ENCODE measurements at regions of chr19 and their contacts with region 1.

Region 1: GRCh38 chr19:29610563-29611271 is 4.6 kb downstream of the POP4 start:
- DNase-seq: peak; percentile 65 to 92 (median 80)
- ATAC-seq: peak; percentile 56 to 62 (median 58)
- H3K4me3 ChIP-seq: no peak overlapping the region
- H3K4me3 Mint-ChIP-seq: no peak overlapping the region
- H3K27ac ChIP-seq: peak overlapping the region; percentile 31
- H3K27ac Mint-ChIP-seq: peak overlapping the region; percentile 31 to 59
- H3K4me1 ChIP-seq: peaks cover 7 to 32% of the 10 kb centered on the region in 2 experiments
- H3K4me1 Mint-ChIP-seq: peaks cover 21 to 37% (median 34%) of the 10 kb centered on the region in 3 donors
- H3K27me3 ChIP-seq: no peaks in the 10 kb centered on the region
- H3K27me3 Mint-ChIP-seq: no peaks in the 10 kb centered on the region

Region 2: GRCh38 chr19:29054886-29055675 is 555.6 kb before region 1 on chr19:
- CTCF ChIA-PET with region 1: no interaction called
- POLR2A ChIA-PET with region 1: no interaction called
- DNase-seq: no peak
- ATAC-seq: no peak
- H3K4me3 ChIP-seq: no peak overlapping the region
- H3K4me3 Mint-ChIP-seq: no peak overlapping the region
- H3K27ac ChIP-seq: no peak overlapping the region
- H3K27ac Mint-ChIP-seq: no peak overlapping the region
- H3K4me1 ChIP-seq: no peaks in the 10 kb centered on the region
- H3K4me1 Mint-ChIP-seq: no peaks in the 10 kb centered on the region
- H3K27me3 ChIP-seq: peaks cover 0 to 14% of the 10 kb centered on the region in 2 experiments
- H3K27me3 Mint-ChIP-seq: peaks cover 0 to 4% of the 10 kb centered on the region in 2 donors

Region 3: DNA sequence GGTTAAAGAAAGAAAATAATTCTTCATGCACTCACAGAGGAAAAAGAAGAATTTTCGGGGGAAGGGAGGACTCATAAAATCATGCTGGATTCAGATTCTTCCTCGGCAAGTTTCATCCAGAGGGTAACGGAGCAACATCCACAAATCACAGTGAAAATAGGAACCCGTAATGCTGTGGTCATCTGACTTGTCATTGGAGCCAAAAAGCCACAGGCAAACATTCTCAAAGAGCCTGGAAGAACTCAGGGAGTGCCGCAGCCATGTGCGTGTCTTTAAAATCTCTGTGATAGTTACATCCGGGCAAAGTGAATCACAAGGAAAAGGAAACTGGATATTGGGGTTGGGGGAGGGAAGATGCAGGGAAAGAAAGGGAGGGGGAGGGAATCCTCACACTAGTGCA is 117.9 kb before region 1 on chr19:
- CTCF ChIA-PET with region 1: no interaction called
- POLR2A ChIA-PET with region 1: no interaction called
- DNase-seq: no peak
- ATAC-seq: no peak
- H3K4me3 ChIP-seq: no peak overlapping the region
- H3K4me3 Mint-ChIP-seq: no peak overlapping the region
- H3K27ac ChIP-seq: no peak overlapping the region
- H3K27ac Mint-ChIP-seq: no peak overlapping the region
- H3K4me1 ChIP-seq: no peaks in the 10 kb centered on the region
- H3K4me1 Mint-ChIP-seq: peaks cover 0 to 7% (median 0%) of the 10 kb centered on the region in 3 donors
- H3K27me3 ChIP-seq: peaks cover 0 to 44% of the 10 kb centered on the region in 2 experiments
- H3K27me3 Mint-ChIP-seq: peaks cover 29 to 33% of the 10 kb centered on the region in 2 donors

Region 4: GRCh38 chr19:29560313-29561075 is 50.2 kb before region 1 on chr19:
- CTCF ChIA-PET with region 1: no interaction called
- POLR2A ChIA-PET with region 1: no interaction called
- DNase-seq: no peak
- ATAC-seq: no peak
- H3K4me3 ChIP-seq: no peak overlapping the region
- H3K4me3 Mint-ChIP-seq: no peak overlapping the region
- H3K27ac ChIP-seq: no peak overlapping the region
- H3K27ac Mint-ChIP-seq: no peak overlapping the region
- H3K4me1 ChIP-seq: no peaks in the 10 kb centered on the region
- H3K4me1 Mint-ChIP-seq: no peaks in the 10 kb centered on the region
- H3K27me3 ChIP-seq: peaks cover 0 to 39% of the 10 kb centered on the region in 2 experiments
- H3K27me3 Mint-ChIP-seq: peaks cover 29 to 40% of the 10 kb centered on the region in 2 donors

Region 5: DNA sequence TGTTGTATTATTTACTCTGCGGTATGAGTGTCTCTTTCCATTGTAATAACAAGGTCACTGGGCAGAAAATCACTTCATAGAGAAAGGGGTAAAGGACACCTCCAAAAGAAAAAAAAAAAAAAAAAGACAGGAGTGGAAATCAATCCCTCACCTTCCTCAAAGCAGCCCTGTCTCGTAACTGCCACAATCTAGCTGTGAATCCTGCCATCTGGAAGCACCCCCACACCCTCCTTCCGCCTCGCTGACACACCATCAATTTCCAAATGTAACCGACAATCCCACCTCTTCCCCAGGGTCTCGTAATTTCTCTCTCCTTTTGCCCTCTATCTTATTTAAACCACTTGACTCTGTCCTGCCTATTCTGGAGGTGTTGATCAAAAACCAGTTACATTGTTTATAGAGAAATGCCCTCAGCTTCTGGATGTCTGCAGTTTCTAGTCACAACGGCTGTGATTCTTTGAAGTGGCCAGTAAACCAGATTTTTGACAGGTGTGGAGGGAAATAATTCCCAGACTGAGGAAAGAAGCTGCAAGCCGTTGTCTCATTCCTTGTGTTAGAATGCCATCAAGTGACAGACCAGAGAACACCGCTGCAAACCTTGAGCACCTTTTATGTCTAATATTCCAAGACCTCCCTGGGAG is 13.7 kb before region 1 on chr19:
- CTCF ChIA-PET with region 1: interaction called in 1 of 2 experiments, 5 read pairs
- POLR2A ChIA-PET with region 1: interaction called in 1 of 2 experiments, 12 read pairs
- DNase-seq: peak in 1 of 35 experiments; percentile 35
- ATAC-seq: no peak
- H3K4me3 ChIP-seq: no peak overlapping the region
- H3K4me3 Mint-ChIP-seq: no peak overlapping the region
- H3K27ac ChIP-seq: no peak overlapping the region
- H3K27ac Mint-ChIP-seq: no peak overlapping the region
- H3K4me1 ChIP-seq: no peaks in the 10 kb centered on the region
- H3K4me1 Mint-ChIP-seq: no peaks in the 10 kb centered on the region
- H3K27me3 ChIP-seq: peaks cover 2 to 35% of the 10 kb centered on the region in 2 experiments
- H3K27me3 Mint-ChIP-seq: peaks cover 23 to 39% of the 10 kb centered on the region in 2 donors

Region 6: DNA sequence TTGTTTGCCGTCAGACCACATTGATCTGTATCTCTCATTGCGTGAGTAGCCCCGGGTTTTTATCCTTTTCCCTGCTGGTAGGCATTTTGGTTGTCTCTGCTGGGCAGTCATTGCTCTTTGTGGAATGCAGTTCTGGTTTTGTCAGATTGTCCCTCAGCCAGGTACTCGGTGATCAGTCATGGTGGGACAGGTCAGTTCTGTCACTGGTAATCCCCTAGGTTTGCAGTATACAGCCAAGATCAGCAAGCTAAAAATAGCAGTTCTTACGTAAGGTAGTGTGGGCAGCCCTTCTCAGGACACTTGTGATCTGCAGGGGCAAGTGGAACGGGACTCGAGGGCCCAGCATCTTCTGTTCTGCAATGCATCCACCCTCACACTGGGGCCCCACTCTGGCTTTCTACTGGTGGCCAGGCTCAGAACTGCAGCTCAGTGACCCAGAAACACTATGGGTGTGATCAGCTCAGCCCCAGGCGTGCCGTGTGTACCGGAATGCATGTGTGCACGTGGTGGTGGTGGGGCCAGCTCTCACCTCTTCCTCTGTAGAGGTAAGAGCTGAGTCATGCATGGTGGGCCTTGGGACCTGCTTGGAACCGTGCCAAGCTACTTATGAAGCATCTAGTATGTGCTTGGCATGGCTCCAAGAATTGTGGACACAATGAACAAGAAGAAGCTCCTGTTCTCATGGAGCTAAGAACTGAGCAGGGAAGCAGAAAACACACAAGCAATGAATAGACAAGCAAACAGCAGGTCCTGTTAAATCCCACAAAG is 60.9 kb after region 1 on chr19:
- CTCF ChIA-PET with region 1: interaction called, 15 to 44 read pairs
- POLR2A ChIA-PET with region 1: interaction called, 4 to 14 read pairs
- DNase-seq: peak; percentile 72 to 91 (median 84)
- ATAC-seq: peak; percentile 50 to 71 (median 70)
- H3K4me3 ChIP-seq: peak overlapping the region; percentile 12 to 39
- H3K4me3 Mint-ChIP-seq: peak overlapping the region; percentile 58 to 89 (median 62)
- H3K27ac ChIP-seq: peak overlapping the region; percentile 97
- H3K27ac Mint-ChIP-seq: peak overlapping the region; percentile 95 to 97
- H3K4me1 ChIP-seq: peaks cover 70 to 100% of the 10 kb centered on the region in 2 experiments
- H3K4me1 Mint-ChIP-seq: peaks cover 82 to 96% (median 93%) of the 10 kb centered on the region in 3 donors
- H3K27me3 ChIP-seq: no peaks in the 10 kb centered on the region
- H3K27me3 Mint-ChIP-seq: no peaks in the 10 kb centered on the region

Region 7: GRCh38 chr19:29714953-29715700 is 104.4 kb after region 1 on chr19 and contains the start of gene C19orf12:
- CTCF ChIA-PET with region 1: interaction called, 36 to 39 read pairs
- POLR2A ChIA-PET with region 1: interaction called, 5 to 25 read pairs
- DNase-seq: peak in 28 of 35 experiments; percentile 15 to 76 (median 42)
- ATAC-seq: peak; percentile 61 to 68 (median 64)
- H3K4me3 ChIP-seq: peak within 1 kb of the TSS; percentile 63 to 71
- H3K4me3 Mint-ChIP-seq: peak within 1 kb of the TSS; percentile 85 to 89 (median 85)
- H3K27ac ChIP-seq: peak within 1 kb of the TSS; percentile 90
- H3K27ac Mint-ChIP-seq: peak within 1 kb of the TSS; percentile 97
- H3K4me1 ChIP-seq: peaks cover 32 to 62% of the 10 kb centered on the region in 2 experiments
- H3K4me1 Mint-ChIP-seq: peaks cover 57 to 61% (median 58%) of the 10 kb centered on the region in 3 donors
- H3K27me3 ChIP-seq: peaks cover 0 to 1% of the 10 kb centered on the region in 2 experiments
- H3K27me3 Mint-ChIP-seq: no peaks in the 10 kb centered on the region
- total RNA-seq, gene C19orf12: 25.1 to 38.7 (median 34.2) TPM

Region 8: DNA sequence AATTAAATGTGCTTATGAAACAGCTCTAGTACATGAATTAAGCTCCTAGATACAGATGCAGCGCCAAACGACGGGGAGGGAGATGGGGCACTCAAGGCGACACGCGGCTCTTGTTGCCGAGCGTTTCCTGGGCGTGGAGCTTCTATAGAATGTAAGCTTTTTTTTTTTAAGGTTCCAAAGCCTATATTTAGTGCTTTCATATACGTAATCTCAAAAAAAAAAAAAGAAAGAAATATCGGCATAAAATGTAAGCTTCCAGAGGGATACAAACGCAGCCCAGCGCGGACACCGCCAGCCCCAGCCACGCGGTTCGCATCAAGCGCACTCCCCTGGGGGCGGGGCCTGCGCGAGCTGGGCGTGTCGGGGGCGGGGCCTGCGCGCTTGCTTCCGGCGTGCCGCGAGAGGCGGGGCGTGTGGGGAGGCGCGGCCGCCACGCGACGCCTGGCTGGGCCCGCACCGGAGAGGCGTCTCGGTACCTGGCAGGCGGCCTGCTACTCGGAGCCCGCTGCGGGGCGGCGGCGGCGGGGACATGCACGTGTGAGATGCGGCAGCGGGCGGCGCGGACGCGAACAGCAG is 331.2 kb after region 1 on chr19 and contains the start of gene URI1:
- CTCF ChIA-PET with region 1: interaction called in 1 of 2 experiments, 3 read pairs
- POLR2A ChIA-PET with region 1: interaction called in 1 of 2 experiments, 13 read pairs
- DNase-seq: peak; percentile 76 to 99 (median 88)
- ATAC-seq: peak; percentile 88 to 96 (median 91)
- H3K4me3 ChIP-seq: peak within 1 kb of the TSS; percentile 75 to 91
- H3K4me3 Mint-ChIP-seq: peak within 1 kb of the TSS; percentile 90 to 94 (median 91)
- H3K27ac ChIP-seq: peak within 1 kb of the TSS; percentile 46
- H3K27ac Mint-ChIP-seq: peak within 1 kb of the TSS; percentile 85 to 89
- H3K4me1 ChIP-seq: peaks cover 23% of the 10 kb centered on the region in 2 experiments
- H3K4me1 Mint-ChIP-seq: peaks cover 39 to 46% (median 45%) of the 10 kb centered on the region in 3 donors
- H3K27me3 ChIP-seq: peaks cover 0 to 12% of the 10 kb centered on the region in 2 experiments
- H3K27me3 Mint-ChIP-seq: peaks cover 0 to 5% of the 10 kb centered on the region in 2 donors
- total RNA-seq, gene URI1: 69.0 to 84.8 (median 75.7) TPM